Activated naive CD4-positive, alpha-beta T cell treated with anti-CD3 and anti-CD28 coated beads for 36 hours (primary cell): ENCODE measurements at regions of chr11 and their contacts with region 1.

Region 1: GRCh38 chr11:7665473-7666291 is 7.6 kb downstream of the CYB5R2 start:
- DNase-seq: peak; percentile 85
- H3K4me3 Mint-ChIP-seq: no peak overlapping the region
- H3K27ac Mint-ChIP-seq: no peak overlapping the region
- H3K4me1 Mint-ChIP-seq: peaks cover 7% of the 10 kb centered on the region
- H3K27me3 Mint-ChIP-seq: no peaks in the 10 kb centered on the region

Region 2: GRCh38 chr11:7571640-7572000 is 94.1 kb before region 1 on chr11:
- CTCF ChIA-PET with region 1: interaction called, 12 read pairs
- intact Hi-C with region 1: loop called (anchors 1 kb)
- DNase-seq: peak; percentile 62
- H3K4me3 Mint-ChIP-seq: no peak overlapping the region
- H3K27ac Mint-ChIP-seq: no peak overlapping the region
- H3K4me1 Mint-ChIP-seq: peaks cover 19% of the 10 kb centered on the region
- H3K27me3 Mint-ChIP-seq: no peaks in the 10 kb centered on the region

Region 3: DNA sequence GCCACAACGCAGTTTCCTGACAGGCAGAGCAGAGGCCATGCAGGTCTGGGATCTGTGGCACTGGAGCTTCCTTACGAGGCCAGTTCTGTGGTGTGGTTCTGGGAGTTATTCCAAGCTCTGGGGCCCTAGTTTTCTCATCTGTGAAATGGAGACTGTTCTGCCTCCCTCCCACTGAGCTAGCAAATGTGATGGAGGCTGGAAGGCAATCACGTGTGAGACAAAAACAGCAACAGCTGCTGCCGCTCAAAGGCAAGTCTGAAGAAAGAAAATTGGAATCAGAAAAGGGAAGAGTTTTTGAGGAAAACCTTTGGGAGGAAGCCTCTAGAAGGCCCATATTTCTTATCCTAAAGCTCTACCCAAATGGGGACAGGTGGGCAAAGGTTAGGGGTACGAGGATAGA is 511.5 kb after region 1 on chr11:
- CTCF ChIA-PET with region 1: no interaction called
- intact Hi-C with region 1: no loop called
- DNase-seq: no peak
- H3K4me3 Mint-ChIP-seq: no peak overlapping the region
- H3K27ac Mint-ChIP-seq: no peak overlapping the region
- H3K4me1 Mint-ChIP-seq: no peaks in the 10 kb centered on the region
- H3K27me3 Mint-ChIP-seq: peaks cover 7% of the 10 kb centered on the region